Heart right ventricle (tissue), 16 donors: ENCODE measurements at regions of chr12 and their contacts with region 1.

Region 1: GRCh38 chr12:64107776-64108175 is 114.3 kb downstream of the KICS2 start:
- DNase-seq: no peak
- ATAC-seq: no peak
- H3K4me3 ChIP-seq: no peak overlapping the region
- H3K27ac ChIP-seq: no peak overlapping the region
- H3K4me1 ChIP-seq: no peaks in the 10 kb centered on the region
- H3K27me3 ChIP-seq: no peaks in the 10 kb centered on the region
- CTCF ChIP-seq: no peak

Region 2: GRCh38 chr12:63836936-63837335 is 270.8 kb before region 1 on chr12:
- intact Hi-C with region 1: loop called in 1 of 10 experiments (anchors 1 kb)
- DNase-seq: no peak
- ATAC-seq: no peak
- H3K4me3 ChIP-seq: no peak overlapping the region
- H3K27ac ChIP-seq: no peak overlapping the region
- H3K4me1 ChIP-seq: no peaks in the 10 kb centered on the region
- H3K27me3 ChIP-seq: no peaks in the 10 kb centered on the region
- CTCF ChIP-seq: no peak

Region 3: DNA sequence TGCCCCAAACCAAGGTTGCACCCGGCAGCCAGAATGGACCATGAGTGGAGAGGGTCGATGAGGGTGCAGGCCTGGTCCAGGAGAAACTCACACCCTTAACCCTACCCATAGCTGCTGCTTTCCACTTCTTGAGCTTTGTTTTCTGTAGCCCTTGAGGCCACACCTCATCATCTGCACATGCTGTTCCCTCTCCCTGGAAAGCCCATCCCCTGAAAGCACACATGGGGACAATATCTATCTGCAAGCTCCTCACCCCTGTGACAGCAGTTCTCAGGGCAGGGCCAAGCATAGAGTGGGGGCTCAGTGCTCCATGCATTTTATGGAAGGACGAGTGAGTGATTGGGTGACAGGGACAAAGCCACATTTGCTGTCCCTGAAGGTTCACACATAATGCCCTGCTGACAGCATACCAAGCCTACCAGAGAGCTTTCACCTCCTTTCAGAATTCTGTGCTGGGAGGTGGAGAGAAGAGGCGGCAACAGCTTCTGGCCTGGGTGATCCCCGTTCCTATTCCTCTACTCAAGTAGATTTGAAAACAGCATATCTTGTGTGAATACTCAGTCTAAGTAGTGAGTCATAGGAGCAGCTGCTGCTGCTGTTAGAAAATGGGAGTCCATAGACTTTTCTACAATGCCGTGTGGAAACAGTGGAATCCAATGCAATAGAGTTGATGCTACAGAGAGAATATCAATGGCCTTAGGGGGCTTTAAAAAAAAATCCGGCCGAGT is 218.7 kb before region 1 on chr12:
- intact Hi-C with region 1: no loop called
- DNase-seq: no peak
- ATAC-seq: peak in 5 of 8 donors; percentile 46 to 72 (median 68)
- H3K4me3 ChIP-seq: no peak overlapping the region
- H3K27ac ChIP-seq: no peak overlapping the region
- H3K4me1 ChIP-seq: peaks cover 0 to 7% (median 0%) of the 10 kb centered on the region in 9 donors
- H3K27me3 ChIP-seq: no peaks in the 10 kb centered on the region
- CTCF ChIP-seq: no peak

Region 4: GRCh38 chr12:63989301-63989845 is 118.4 kb before region 1 on chr12:
- intact Hi-C with region 1: no loop called
- DNase-seq: no peak
- ATAC-seq: peak in 2 of 8 donors; percentile 46 to 56
- H3K4me3 ChIP-seq: no peak overlapping the region
- H3K27ac ChIP-seq: no peak overlapping the region
- H3K4me1 ChIP-seq: peaks cover 0 to 34% (median 0%) of the 10 kb centered on the region in 9 donors
- H3K27me3 ChIP-seq: no peaks in the 10 kb centered on the region
- CTCF ChIP-seq: no peak